Right ventricle myocardium inferior (tissue), 1 donor: ENCODE measurements at regions of chr18 and their contacts with region 1.

Region 1: GRCh38 chr18:23812546-23813440 is 123.5 kb downstream of the LAMA3 start:
- DNase-seq: no peak
- ATAC-seq: no peak

Region 2: GRCh38 chr18:23563377-23564043 is 249.3 kb before region 1 on chr18:
- intact Hi-C with region 1: no loop called
- DNase-seq: no peak
- ATAC-seq: no peak

Region 3: GRCh38 chr18:23918401-23919032 is 105.7 kb after region 1 on chr18:
- intact Hi-C with region 1: loop called (anchors 5 kb)
- DNase-seq: peak; percentile 75
- ATAC-seq: peak; percentile 71

Region 4: GRCh38 chr18:24560511-24560981 is 747.8 kb after region 1 on chr18:
- intact Hi-C with region 1: no loop called
- DNase-seq: no peak
- ATAC-seq: no peak